ENCODE measurements at regions of chr4 and their contacts with region 1.

Region 1: DNA sequence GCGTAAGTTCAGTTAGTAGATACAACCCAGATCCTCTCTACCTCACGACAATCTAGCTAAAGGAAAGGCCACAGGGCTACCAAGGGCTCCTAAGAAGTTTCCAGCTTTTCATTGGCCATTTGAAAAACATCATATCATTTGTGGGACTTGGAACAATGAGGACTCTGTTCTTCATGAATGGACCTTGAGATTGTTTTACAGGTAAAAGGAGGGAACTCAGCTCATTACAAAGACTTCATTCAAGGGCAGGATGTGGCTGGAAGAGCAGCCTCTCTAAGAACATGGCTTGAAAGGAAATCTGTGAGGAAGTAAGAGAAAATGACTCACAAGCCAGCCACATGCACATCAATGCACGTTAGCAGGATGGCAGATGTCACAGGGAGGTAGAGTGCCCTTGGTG is 105.9 kb upstream of the SLC7A11 start:
- DNase-seq: peak; percentile 32
- ATAC-seq: peak; percentile 74
- H3K4me3 ChIP-seq: no peak overlapping the region
- H3K27ac ChIP-seq: no peak overlapping the region
- H3K4me1 ChIP-seq: peaks cover 4% of the 10 kb centered on the region; the same call in 1 of the 2 replicates
- H3K27me3 ChIP-seq: no peaks in the 10 kb centered on the region
- CTCF ChIP-seq: no peak
- EP300 ChIP-seq: peak in 1 of 2 experiments; percentile 41; a peak in 1 of 4 replicates
- POLR2A ChIP-seq: no peak
- RAD21 ChIP-seq: no peak

Region 2: DNA sequence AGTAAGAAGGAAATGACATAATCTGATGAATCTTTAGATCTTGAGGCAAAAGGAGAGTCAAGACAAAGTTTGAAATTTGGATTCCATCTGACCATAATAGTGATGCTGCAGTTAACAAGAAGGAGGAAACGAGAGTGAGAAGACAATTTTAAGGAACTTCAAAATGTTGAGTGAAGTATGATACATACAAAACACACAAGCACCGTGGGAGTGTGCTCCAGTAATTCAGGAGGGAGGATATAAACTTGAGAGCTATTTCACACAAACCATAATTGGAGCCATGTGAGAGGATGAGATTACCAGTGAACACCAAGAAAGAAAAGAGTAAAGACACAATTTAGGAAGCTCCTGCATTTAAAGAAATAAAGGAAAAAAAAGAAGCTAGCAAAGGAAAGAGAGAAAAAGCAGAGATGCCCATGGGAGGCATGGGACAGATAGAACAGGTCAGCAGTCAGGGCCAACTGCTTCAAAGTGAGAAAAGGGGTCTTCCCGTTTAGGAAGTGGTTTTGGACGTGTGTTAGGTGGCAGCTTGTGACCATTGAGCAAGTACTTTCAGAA is 44.8 kb after region 1 on chr4:
- CTCF ChIA-PET with region 1: no interaction called
- POLR2A ChIA-PET with region 1: no interaction called
- RAD21 ChIA-PET with region 1: interaction called, 8 read pairs
- SMC1A ChIA-PET with region 1: interaction called, 6 read pairs
- in situ Hi-C with region 1: no loop called
- intact Hi-C with region 1: loop called (anchors 2 kb)
- DNase-seq: peak; percentile 54
- ATAC-seq: peak; percentile 85
- H3K4me3 ChIP-seq: no peak overlapping the region
- H3K27ac ChIP-seq: peak overlapping the region; percentile 62
- H3K4me1 ChIP-seq: peaks cover 10% of the 10 kb centered on the region
- H3K27me3 ChIP-seq: no peaks in the 10 kb centered on the region
- CTCF ChIP-seq: no peak
- EP300 ChIP-seq: peak in 1 of 2 experiments; percentile 6; a peak in 1 of 4 replicates
- POLR2A ChIP-seq: no peak
- RAD21 ChIP-seq: no peak

Region 3: DNA sequence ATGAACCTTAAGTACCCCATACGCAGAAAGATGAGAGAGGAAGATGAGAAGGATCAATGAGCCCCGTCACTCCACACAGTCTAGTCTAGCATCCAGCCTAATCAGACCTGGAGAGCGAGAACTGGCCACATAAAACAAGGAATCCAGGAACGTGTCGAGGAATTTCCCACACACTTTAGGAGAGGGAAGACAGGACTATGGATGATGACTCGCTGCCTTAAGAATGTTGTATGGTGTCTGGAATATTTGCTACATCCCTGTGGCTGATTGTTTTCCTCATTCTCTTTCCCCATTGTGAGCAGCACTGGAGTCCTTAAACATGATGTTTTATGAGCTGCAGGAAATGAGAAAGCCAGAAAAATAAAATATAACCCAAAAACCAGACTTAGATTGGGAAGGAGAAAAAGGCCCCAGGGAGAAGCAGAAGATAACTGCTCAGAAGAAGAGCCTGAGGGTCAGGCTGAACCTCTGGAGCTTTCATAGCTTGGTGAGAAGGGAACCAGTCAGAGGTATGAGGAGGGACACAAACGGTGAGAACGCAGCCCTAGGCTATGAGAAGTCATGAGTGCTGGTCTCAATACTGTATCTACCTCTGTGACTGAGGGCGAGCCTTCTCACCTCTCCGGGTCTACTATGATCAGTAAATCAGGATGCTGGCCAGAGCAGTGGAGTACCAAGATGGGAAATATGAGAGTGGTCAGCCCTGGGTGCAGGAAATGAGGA is 528.0 kb after region 1 on chr4:
- CTCF ChIA-PET with region 1: no interaction called
- POLR2A ChIA-PET with region 1: no interaction called
- RAD21 ChIA-PET with region 1: no interaction called
- SMC1A ChIA-PET with region 1: no interaction called
- in situ Hi-C with region 1: no loop called
- intact Hi-C with region 1: no loop called
- DNase-seq: no peak
- ATAC-seq: no peak
- H3K4me3 ChIP-seq: no peak overlapping the region
- H3K27ac ChIP-seq: no peak overlapping the region
- H3K4me1 ChIP-seq: no peaks in the 10 kb centered on the region
- H3K27me3 ChIP-seq: peaks cover 3% of the 10 kb centered on the region in 2 experiments; a peak in 2 of 4 replicates
- CTCF ChIP-seq: no peak
- EP300 ChIP-seq: no peak
- POLR2A ChIP-seq: no peak
- RAD21 ChIP-seq: no peak

Measured in GM12878 (cell line).